Left colon (tissue), 2 donors: ENCODE measurements at regions of chr14 and their contacts with region 1.

Region 1: GRCh38 chr14:21408147-21408546 is 24.3 kb upstream of the SUPT16H start:
- DNase-seq: no peak
- ATAC-seq: no peak

Region 2: DNA sequence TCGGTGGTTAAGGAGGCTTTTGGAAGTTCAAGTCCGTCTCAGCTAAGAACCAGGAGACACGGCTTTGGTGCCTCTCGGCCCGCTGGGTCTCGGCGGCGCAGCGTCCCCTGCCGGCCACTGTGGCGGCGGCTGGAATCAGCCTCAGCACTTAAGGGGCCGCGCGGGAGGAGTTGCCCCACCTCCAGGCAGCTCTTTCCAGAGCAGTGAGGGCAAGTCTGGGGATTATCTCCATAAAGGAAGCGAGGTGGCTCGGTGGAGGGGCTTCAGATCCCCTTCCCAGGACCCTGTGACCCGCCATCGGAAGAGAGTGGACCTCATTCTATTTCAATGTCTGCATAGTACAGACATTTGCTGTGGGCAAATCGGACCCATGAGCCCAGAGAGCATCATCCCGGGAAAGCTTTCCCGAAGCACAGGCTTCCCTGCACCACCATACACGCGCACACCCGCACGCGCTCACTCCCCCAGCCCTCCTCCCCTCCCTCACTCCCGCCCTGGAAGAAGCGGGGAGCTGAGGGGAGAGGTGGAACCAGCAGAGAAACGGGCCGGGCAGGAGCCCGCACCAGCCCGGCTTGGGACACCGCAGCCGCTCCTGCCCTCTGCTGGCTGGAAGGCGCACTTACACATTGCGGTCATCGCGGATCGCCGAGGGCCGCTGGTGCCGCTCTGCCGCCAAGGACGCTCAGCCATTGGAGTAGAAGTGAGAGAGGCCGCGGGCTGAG is 437.0 kb before region 1 on chr14:
- intact Hi-C with region 1: no loop called
- DNase-seq: peak; percentile 75 to 81
- ATAC-seq: peak; percentile 97

Region 3: DNA sequence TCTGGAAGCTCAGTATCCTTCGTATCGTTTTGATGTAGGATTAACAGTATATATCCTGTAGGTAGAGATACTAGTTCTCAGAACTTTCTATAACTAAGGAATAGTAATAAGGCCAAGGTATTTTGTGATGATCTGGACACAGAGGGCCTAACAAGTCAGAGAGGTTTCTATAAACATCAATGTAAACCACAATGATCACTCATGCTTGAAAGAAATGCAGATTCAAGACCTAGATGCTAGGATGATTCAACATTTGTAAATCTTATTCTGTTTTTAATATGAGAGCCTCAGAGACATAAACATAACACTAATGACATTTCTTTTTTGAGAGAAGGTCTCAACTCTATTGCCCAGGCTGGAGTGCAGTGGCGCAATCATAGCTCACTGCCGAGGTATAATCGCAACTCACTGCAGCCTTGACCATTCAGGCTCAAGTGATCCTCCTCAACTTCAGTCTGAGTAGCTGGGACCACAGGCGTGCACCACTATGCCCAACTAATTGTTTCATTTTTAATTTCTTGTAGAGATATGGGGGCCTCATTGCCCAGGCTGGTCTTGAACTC is 40.5 kb before region 1 on chr14:
- intact Hi-C with region 1: loop called in 1 of 2 experiments (anchors 5 kb)
- DNase-seq: no peak
- ATAC-seq: no peak